Posterior vena cava (tissue), 2 donors: ENCODE measurements at regions of chr2 and their contacts with region 1.

Region 1: GRCh38 chr2:172931918-172932520 is 143.6 kb upstream of the MAP3K20 start:
- DNase-seq: peak; percentile 87

Region 2: DNA sequence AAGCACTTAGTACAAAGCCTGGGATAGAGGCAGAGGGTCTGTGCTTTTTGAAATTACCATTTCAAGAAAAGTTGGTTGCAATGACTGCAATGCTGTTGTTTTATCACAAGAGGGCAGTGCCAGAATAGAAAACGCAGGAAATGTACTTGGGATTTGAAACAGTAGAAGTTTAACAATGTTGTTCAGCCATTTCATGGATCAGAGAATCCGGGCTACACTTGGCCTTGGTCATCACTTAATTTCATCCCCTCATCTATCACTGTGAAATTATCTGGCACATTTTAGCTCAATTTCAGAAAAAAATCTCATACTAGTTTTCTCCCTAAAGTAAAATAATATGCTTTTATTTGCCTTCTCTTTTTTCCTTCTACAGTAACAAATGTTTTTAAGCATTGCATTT is 125.5 kb before region 1 on chr2:
- intact Hi-C with region 1: loop called (anchors 5 kb)
- DNase-seq: no peak

Region 3: DNA sequence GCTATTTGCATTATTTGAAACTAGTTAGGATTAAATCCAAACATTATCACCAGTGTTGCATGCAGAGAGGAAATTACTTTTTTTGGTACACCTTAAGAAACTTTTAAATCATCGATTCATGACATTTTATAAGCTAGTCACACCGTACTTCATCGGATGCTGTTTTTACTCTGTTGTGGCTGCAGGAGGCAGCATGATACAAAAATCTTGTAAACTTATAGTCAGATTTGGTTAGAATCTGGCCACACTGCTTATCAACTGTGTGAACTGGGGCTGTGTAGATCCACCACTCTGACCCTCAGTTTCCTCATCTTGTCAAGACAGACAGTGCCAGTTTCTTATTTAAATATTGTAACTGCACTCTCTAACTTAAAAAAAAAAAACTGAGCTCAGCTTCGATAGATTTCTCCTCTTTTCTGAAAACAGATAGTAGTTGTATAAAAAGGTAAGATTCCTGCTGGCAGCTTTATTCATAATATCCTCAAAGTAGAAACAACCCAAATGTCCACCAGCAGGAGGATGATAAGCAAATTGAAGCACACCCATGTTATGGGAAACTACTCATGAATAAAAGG is 118.6 kb before region 1 on chr2:
- intact Hi-C with region 1: loop called (anchors 5 kb)
- DNase-seq: no peak

Region 4: DNA sequence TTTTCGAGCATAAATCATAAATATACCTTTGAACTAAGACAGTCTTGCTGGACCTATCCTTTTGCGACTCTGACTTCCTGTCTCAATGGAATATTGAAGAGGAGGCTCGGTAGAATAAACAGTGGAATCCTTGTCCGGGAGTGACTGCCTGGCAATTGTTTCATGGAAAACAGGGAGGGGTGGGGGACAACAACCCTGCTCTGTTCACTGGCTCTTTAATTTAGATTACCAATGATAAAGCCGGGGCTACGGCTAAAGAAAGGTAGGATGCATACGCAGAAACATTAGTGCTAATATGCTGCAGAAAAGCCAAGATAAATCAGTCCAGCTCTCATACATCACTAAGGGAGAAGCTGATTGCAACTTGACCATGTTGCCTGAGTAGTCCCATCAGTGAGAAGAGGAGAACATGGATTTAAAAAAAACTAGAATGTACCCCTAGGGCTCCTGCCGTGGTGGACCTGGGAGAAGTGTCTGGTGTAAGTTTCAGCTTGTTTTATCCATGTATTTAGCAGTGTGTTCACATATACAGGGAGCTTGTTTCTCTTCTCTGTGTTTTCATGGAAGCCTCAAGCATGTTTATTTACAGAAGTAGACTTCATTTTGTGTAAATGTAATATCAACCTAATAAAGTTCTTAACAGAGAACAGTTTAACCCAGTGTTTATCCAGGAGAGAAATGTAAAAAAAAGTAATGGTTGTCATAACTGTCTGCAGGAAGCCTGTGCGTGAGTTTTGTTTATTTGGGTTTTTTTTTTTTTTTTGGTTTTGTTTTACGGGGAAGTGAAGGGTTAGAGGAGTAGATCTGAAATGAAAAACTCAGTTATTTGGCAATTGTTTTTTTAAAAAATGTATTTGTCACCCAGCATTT is 72.0 kb before region 1 on chr2:
- intact Hi-C with region 1: loop called in 1 of 2 experiments (anchors 5 kb)
- DNase-seq: no peak

Region 5: GRCh38 chr2:172995323-172996244 is 63.6 kb after region 1 on chr2:
- intact Hi-C with region 1: no loop called
- DNase-seq: no peak